ENCODE measurements at regions of chr17 and their contacts with region 1.

Region 1: DNA sequence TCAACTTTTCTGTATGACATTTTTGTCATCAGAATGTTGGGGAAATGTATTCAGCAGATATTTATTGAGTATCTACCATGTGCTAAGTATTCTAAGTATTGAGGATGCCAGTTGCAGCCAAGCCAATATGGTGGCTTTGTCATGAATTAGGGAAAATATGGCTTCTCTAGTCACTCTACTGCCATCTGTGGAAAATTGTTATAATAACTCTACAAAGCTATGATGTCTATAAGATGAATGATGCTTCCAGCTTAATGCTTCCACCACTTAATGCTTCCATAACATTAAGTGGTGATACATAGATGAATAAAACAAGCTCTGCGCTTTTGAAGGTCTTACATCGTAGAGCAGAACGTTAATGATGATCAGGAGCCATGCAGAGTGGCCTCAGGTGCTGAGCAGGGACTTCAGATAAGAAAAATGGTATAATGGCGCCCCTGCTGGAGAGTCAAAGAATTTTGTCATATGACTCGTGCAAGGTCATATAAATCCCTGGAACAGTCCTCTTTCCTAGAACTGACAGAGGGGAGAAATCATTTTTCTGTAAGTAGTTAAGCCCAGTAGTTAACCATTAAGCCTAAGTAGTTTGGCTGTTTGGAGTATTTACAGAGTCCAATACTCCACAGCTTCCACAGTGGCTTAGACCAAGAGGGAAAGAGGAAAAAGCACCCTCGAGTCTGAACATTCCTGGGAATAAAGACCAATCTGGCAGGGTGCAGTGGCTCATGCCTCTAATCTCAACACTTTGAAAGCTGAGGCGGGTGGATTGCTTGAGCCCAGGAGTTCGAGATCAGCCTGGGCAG is 2.7 kb upstream of the TMIGD1 start:
- DNase-seq: peak; percentile 22 to 80 (median 74)
- ATAC-seq: peak; percentile 63
- H3K4me3 ChIP-seq: no peak overlapping the region
- H3K4me3 Mint-ChIP-seq: no peak overlapping the region
- H3K27ac ChIP-seq: no peak overlapping the region
- H3K27ac Mint-ChIP-seq: peak overlapping the region in 5 of 9 donors; percentile 1 to 69 (median 16)
- H3K4me1 ChIP-seq: peaks cover 11 to 16% of the 10 kb centered on the region in 2 donors
- H3K4me1 Mint-ChIP-seq: peaks cover 13 to 43% (median 36%) of the 10 kb centered on the region in 7 donors
- H3K27me3 ChIP-seq: no peaks in the 10 kb centered on the region
- H3K27me3 Mint-ChIP-seq: peaks cover 0 to 2% (median 0%) of the 10 kb centered on the region in 5 donors

Region 2: GRCh38 chr17:30027676-30028075 is 308.9 kb before region 1 on chr17:
- CTCF ChIA-PET with region 1: no interaction called
- POLR2A ChIA-PET with region 1: no interaction called
- intact Hi-C with region 1: loop called in 1 of 2 experiments (anchors 5 kb)
- DNase-seq: no peak
- ATAC-seq: no peak
- H3K4me3 ChIP-seq: no peak overlapping the region
- H3K4me3 Mint-ChIP-seq: no peak overlapping the region
- H3K27ac ChIP-seq: no peak overlapping the region
- H3K27ac Mint-ChIP-seq: no peak overlapping the region
- H3K4me1 ChIP-seq: no peaks in the 10 kb centered on the region
- H3K4me1 Mint-ChIP-seq: no peaks in the 10 kb centered on the region
- H3K27me3 ChIP-seq: no peaks in the 10 kb centered on the region
- H3K27me3 Mint-ChIP-seq: peaks cover 0 to 8% (median 0%) of the 10 kb centered on the region in 5 donors

Region 3: DNA sequence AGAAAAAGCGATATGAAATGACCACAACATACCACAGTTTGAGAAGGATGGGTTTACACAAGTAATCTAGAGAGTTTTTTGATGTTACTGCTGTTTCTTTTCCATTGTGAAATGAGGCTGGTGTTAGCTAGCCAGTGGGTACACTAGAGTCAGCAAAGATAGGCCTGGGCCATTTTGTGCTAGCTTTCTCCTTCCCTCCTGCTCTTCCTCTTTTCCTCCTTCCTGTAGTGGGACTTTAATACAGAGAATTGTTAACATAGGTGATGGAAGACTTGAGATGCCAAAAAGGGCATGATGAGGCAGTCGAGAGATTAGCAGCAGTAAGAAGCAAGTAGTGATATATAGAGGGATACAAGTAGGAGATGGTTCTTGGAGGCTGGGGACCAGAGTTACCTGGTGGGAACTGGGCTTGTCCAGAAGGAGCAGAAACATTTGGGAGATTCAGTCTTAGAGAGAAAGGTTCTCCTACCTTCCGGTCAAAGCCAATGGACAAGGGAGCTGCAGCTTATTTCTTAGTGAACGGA is 212.2 kb before region 1 on chr17:
- CTCF ChIA-PET with region 1: interaction called, 66 read pairs
- POLR2A ChIA-PET with region 1: interaction called, 8 read pairs
- intact Hi-C with region 1: loop called (anchors 1 kb)
- DNase-seq: no peak
- ATAC-seq: no peak
- H3K4me3 ChIP-seq: no peak overlapping the region
- H3K4me3 Mint-ChIP-seq: no peak overlapping the region
- H3K27ac ChIP-seq: no peak overlapping the region
- H3K27ac Mint-ChIP-seq: peak overlapping the region in 5 of 9 donors; percentile 33 to 68 (median 51)
- H3K4me1 ChIP-seq: no peaks in the 10 kb centered on the region
- H3K4me1 Mint-ChIP-seq: peaks cover 22 to 54% (median 42%) of the 10 kb centered on the region in 7 donors
- H3K27me3 ChIP-seq: no peaks in the 10 kb centered on the region
- H3K27me3 Mint-ChIP-seq: no peaks in the 10 kb centered on the region

Region 4: GRCh38 chr17:30299000-30299399 is 37.6 kb before region 1 on chr17:
- CTCF ChIA-PET with region 1: interaction called, 10 read pairs
- POLR2A ChIA-PET with region 1: interaction called, 4 read pairs
- intact Hi-C with region 1: loop called in 1 of 2 experiments (anchors 1 kb)
- DNase-seq: peak in 1 of 9 donors; percentile 2
- ATAC-seq: no peak
- H3K4me3 ChIP-seq: no peak overlapping the region
- H3K4me3 Mint-ChIP-seq: no peak overlapping the region
- H3K27ac ChIP-seq: no peak overlapping the region
- H3K27ac Mint-ChIP-seq: no peak overlapping the region
- H3K4me1 ChIP-seq: no peaks in the 10 kb centered on the region
- H3K4me1 Mint-ChIP-seq: no peaks in the 10 kb centered on the region
- H3K27me3 ChIP-seq: no peaks in the 10 kb centered on the region
- H3K27me3 Mint-ChIP-seq: peaks cover 0 to 4% (median 0%) of the 10 kb centered on the region in 5 donors

Region 5: DNA sequence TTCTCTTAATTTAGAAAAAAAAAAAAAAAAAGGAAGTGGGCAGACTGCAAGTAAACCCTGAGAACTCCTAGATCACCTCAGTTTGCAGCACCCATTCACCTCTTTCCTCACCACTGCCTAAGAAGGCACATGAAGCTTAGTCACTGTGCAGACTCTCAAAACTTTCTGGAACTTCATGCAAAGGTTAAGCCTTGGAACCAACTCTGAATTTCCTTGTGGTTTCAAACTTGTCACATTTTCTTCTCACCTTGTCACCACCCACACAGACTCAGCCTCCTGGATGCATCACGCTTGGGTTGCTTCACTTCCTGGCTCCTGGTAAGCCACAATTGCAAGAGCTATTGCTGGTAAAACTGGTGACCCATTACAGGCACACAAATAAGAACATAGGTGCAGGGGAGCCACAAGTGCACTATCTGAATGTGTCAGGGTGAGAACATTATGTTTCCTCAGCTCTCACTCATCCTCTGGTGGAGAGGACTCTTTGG is 27.2 kb after region 1 on chr17:
- CTCF ChIA-PET with region 1: interaction called, 4 read pairs
- POLR2A ChIA-PET with region 1: no interaction called
- intact Hi-C with region 1: loop called in 1 of 2 experiments (anchors 2 kb)
- DNase-seq: peak in 8 of 9 donors; percentile 34 to 78 (median 57)
- ATAC-seq: peak; percentile 88
- H3K4me3 ChIP-seq: no peak overlapping the region
- H3K4me3 Mint-ChIP-seq: peak overlapping the region; percentile 29 to 82 (median 64)
- H3K27ac ChIP-seq: peak overlapping the region; percentile 25
- H3K27ac Mint-ChIP-seq: peak overlapping the region; percentile 8 to 89 (median 84)
- H3K4me1 ChIP-seq: peaks cover 18 to 21% of the 10 kb centered on the region in 2 donors
- H3K4me1 Mint-ChIP-seq: peaks cover 6 to 32% (median 25%) of the 10 kb centered on the region in 7 donors
- H3K27me3 ChIP-seq: no peaks in the 10 kb centered on the region
- H3K27me3 Mint-ChIP-seq: no peaks in the 10 kb centered on the region

Region 6: DNA sequence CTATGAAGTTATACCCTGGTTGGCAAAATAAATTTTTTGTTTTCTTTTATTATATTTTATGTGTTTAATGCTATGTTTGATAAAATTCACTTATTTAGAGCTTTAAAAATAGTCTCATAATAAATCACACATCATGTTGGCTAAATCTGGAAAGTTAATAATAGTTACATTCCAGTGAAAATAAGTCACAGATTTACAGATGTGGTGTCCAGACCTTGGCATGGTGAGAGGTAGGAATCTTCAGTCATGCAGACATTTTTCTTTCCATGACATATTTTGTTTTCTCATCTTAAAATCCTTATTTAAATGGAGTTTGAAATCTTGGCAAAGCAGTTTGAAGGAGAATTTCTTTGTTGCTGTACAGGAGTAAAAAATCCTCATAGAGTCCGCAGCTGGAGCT is 92.6 kb after region 1 on chr17:
- CTCF ChIA-PET with region 1: no interaction called
- POLR2A ChIA-PET with region 1: no interaction called
- intact Hi-C with region 1: no loop called
- DNase-seq: no peak
- ATAC-seq: no peak
- H3K4me3 ChIP-seq: no peak overlapping the region
- H3K4me3 Mint-ChIP-seq: no peak overlapping the region
- H3K27ac ChIP-seq: no peak overlapping the region
- H3K27ac Mint-ChIP-seq: no peak overlapping the region
- H3K4me1 ChIP-seq: no peaks in the 10 kb centered on the region
- H3K4me1 Mint-ChIP-seq: peaks cover 0 to 2% (median 0%) of the 10 kb centered on the region in 7 donors
- H3K27me3 ChIP-seq: no peaks in the 10 kb centered on the region
- H3K27me3 Mint-ChIP-seq: no peaks in the 10 kb centered on the region

Region 7: DNA sequence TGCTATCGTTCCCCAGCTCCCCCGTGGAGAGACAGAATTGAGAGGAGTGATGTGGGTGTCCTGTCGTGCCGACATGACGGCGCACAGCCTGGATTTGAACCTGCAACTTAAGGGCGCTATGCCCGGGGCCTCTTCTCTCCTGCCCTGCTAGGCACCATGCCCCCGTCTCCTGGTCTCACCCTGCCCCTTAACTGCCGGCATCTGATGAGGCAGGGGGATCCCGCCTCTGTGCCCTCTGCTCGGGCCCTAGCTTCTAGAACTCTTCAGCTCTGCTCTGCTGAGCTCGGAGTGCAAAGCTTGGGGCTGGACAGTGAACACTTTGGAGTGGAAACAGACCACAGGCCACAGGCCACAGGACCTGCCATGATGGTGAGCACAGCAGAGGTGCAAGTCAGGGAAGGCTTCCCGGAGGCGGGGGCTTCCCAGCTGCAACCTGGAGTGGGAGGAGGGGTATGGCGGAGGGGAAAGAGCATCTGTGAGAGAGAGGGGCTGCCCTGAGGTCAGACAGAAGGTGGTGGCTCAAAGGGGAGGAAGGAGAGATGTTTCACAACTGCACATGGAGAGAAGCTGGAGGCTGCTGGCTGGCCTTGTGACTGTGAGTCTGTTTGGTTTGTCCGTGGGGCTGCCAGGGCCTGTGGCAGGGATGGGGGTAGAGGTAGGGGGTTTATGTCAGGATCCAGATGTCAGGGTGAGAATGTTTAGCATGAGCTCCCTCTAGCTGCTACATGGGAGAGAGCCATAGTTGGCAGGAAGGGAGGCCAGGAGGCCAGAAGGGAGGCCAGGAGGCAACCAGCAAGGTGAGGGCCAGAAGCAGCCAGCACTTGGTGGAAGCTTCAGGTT is 380.1 kb after region 1 on chr17:
- CTCF ChIA-PET with region 1: interaction called, 3 read pairs
- POLR2A ChIA-PET with region 1: no interaction called
- intact Hi-C with region 1: loop called in 1 of 2 experiments (anchors 2 kb)
- DNase-seq: no peak
- ATAC-seq: no peak
- H3K4me3 ChIP-seq: no peak overlapping the region
- H3K4me3 Mint-ChIP-seq: no peak overlapping the region
- H3K27ac ChIP-seq: no peak overlapping the region
- H3K27ac Mint-ChIP-seq: no peak overlapping the region
- H3K4me1 ChIP-seq: peaks cover 0 to 3% of the 10 kb centered on the region in 2 donors
- H3K4me1 Mint-ChIP-seq: peaks cover 5 to 12% (median 9%) of the 10 kb centered on the region in 7 donors
- H3K27me3 ChIP-seq: no peaks in the 10 kb centered on the region
- H3K27me3 Mint-ChIP-seq: peaks cover 0 to 2% (median 0%) of the 10 kb centered on the region in 5 donors